ENCODE measurements at regions of chr22 and their contacts with region 1.

Region 1: DNA sequence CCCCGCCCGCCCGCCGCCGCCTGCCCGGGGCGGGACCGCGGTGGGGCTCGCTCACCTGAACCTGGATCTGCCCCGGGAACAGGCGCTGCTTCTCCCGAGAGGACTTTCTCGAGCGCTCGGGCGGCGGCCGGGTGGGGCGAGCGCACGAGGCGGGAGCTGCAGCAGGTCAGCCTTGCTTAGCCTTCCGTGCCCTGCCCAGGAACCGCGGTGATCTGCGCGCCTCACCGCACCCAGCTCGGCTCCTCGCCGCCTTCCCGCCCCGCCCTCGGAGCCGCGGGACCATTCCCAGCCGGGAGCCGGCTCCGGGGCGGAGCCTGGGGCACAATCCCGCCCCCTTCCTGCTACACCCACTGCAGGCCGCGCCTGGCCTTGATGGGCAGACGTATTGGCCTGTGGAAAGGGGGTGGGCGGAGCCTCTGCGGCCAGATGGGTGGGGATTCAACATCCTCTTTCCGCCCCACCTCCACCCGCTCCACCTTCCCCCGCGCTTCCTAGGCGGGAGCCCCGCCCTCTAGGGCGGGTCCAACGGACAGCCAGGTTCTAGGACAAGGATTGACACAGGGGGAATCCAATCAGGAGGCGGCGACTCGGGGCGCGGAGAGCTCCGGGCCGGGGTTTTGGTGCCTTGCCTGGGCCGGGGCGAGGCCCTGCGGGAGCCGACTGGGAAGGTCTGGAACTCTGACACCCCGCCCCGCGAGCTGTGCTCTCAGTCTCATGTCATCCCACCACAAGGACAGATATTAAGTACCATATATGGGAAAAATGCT is at the start of gene MYH9:
- DNase-seq: peak; percentile 97 to 99 (median 99)
- H3K4me3 ChIP-seq: peak within 1 kb of the TSS; percentile 82
- H3K4me3 Mint-ChIP-seq: peak within 1 kb of the TSS; percentile 85 to 99 (median 90)
- H3K27ac ChIP-seq: peak within 1 kb of the TSS; percentile 64
- H3K27ac Mint-ChIP-seq: peak within 1 kb of the TSS; percentile 73 to 99 (median 93)
- H3K4me1 ChIP-seq: peaks cover 33% of the 10 kb centered on the region
- H3K4me1 Mint-ChIP-seq: peaks cover 34 to 43% (median 38%) of the 10 kb centered on the region in 3 donors
- H3K27me3 ChIP-seq: no peaks in the 10 kb centered on the region
- H3K27me3 Mint-ChIP-seq: peaks cover 0 to 1% of the 10 kb centered on the region in 2 donors
- total RNA-seq, gene MYH9: 680 to 684 TPM

Region 2: DNA sequence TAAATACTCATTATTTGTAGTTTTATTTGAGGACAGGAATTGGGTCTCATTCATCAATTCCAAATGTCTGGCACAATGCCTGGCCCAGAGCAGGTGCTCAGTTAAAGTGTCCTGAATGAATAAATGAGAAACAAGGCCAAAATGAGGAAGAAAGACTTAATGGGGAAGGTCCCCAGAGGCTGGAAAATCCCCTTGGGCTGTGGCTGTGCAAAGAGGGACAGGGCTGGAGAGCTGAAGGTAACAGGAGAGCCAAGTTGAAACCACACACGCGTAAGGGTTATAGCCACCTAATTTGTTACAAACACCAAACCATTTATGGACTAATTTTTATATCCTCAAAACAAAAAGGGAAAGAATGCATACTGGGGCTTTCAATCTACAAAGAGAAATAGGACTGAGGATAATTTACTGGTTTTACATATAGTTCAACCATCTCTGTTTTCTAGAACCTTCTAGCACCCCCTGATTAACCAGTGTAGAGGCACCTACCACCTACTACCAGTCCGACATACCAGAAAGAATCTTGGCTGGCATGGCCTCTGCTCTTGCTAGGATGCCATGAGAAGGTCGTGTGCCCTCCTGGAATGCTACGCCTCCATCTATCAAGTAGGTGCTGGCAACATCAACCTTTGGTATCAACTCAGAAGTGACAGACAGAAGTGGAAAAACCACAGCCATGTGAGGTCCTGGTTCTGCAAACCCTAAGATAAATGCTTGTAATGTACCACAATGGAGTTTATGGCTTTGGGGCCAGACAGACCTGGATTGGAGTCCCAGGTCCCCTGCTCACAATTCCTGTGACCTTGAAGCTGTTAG is 28.5 kb before region 1 on chr22:
- CTCF ChIA-PET with region 1: interaction called, 17 read pairs
- POLR2A ChIA-PET with region 1: interaction called, 17 read pairs
- DNase-seq: peak in 1 of 5 donors; percentile 53
- H3K4me3 ChIP-seq: peak overlapping the region; percentile 5
- H3K4me3 Mint-ChIP-seq: peak overlapping the region; percentile 60 to 76 (median 71)
- H3K27ac ChIP-seq: no peak overlapping the region
- H3K27ac Mint-ChIP-seq: peak overlapping the region; percentile 92 to 99 (median 95)
- H3K4me1 ChIP-seq: peaks cover 98% of the 10 kb centered on the region
- H3K4me1 Mint-ChIP-seq: peaks cover 94 to 99% (median 99%) of the 10 kb centered on the region in 3 donors
- H3K27me3 ChIP-seq: no peaks in the 10 kb centered on the region
- H3K27me3 Mint-ChIP-seq: peaks cover 0 to 4% of the 10 kb centered on the region in 2 donors

Region 3: GRCh38 chr22:36369922-36370791 is 17.8 kb before region 1 on chr22:
- CTCF ChIA-PET with region 1: interaction called, 17 read pairs
- POLR2A ChIA-PET with region 1: interaction called, 64 read pairs
- DNase-seq: peak in 1 of 5 donors; percentile 53
- H3K4me3 ChIP-seq: peak overlapping the region; percentile 23
- H3K4me3 Mint-ChIP-seq: peak overlapping the region; percentile 83 to 96 (median 89)
- H3K27ac ChIP-seq: peak overlapping the region; percentile 38
- H3K27ac Mint-ChIP-seq: peak overlapping the region; percentile 85 to 100 (median 98)
- H3K4me1 ChIP-seq: peaks cover 100% of the 10 kb centered on the region
- H3K4me1 Mint-ChIP-seq: peaks cover 88 to 98% (median 97%) of the 10 kb centered on the region in 3 donors
- H3K27me3 ChIP-seq: no peaks in the 10 kb centered on the region
- H3K27me3 Mint-ChIP-seq: peaks cover 0 to 4% of the 10 kb centered on the region in 2 donors

Region 4: DNA sequence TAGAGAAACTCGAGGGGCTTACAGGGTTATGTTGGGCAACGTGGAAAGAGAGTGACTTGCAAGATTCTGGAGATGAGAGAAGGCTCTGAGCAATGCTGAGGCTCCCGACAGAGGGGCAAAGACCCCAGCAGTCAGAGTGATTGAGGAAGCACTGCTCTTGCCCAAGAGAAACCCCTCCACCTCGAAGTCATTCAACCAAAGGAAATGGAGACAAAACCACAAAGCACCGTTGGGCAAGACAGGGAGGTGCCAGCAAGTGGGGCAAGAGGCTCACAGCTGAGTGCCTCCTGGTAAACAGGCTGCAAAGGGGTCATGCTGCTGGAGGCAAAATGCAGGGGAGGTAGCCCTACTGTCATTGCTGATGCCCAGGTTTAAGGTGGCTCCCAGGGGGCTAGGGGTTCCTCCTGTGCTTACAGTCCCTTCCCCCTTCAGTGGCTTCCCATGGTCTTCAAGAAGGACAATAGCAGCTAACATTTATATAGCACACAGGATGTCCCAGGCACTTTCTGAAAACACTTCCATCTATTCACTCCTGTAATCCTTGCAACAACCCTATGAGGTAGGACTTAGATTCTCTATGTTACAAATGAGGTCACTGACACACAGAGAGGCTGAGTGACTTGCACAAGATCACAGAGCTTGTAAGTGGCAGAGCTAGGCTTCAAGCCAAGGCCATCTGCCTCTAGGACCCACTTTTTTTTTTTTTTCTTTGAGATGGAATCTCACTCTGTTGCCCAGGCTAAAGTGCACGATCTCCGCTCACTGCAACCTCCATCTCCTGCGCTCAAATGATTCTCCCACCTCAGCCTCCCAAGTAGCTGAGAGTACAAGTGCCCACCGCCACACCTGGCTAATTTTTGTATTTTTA is 18.0 kb after region 1 on chr22:
- CTCF ChIA-PET with region 1: interaction called, 4 read pairs
- POLR2A ChIA-PET with region 1: interaction called, 12 read pairs
- DNase-seq: peak; percentile 39 to 81 (median 69)
- H3K4me3 ChIP-seq: peak overlapping the region; percentile 11
- H3K4me3 Mint-ChIP-seq: peak overlapping the region; percentile 29 to 71 (median 61)
- H3K27ac ChIP-seq: peak overlapping the region; percentile 45
- H3K27ac Mint-ChIP-seq: peak overlapping the region; percentile 85 to 97 (median 94)
- H3K4me1 ChIP-seq: peaks cover 56% of the 10 kb centered on the region
- H3K4me1 Mint-ChIP-seq: peaks cover 47 to 65% (median 60%) of the 10 kb centered on the region in 3 donors
- H3K27me3 ChIP-seq: no peaks in the 10 kb centered on the region
- H3K27me3 Mint-ChIP-seq: no peaks in the 10 kb centered on the region

Region 5: GRCh38 chr22:36454916-36455570 is 67.1 kb after region 1 on chr22:
- CTCF ChIA-PET with region 1: interaction called, 4 read pairs
- POLR2A ChIA-PET with region 1: interaction called, 11 read pairs
- DNase-seq: peak; percentile 94 to 97 (median 95)
- H3K4me3 ChIP-seq: peak overlapping the region; percentile 85
- H3K4me3 Mint-ChIP-seq: peak overlapping the region; percentile 78 to 89 (median 82)
- H3K27ac ChIP-seq: peak overlapping the region; percentile 86
- H3K27ac Mint-ChIP-seq: peak overlapping the region; percentile 87 to 95 (median 92)
- H3K4me1 ChIP-seq: peaks cover 49% of the 10 kb centered on the region
- H3K4me1 Mint-ChIP-seq: peaks cover 39 to 53% (median 45%) of the 10 kb centered on the region in 3 donors
- H3K27me3 ChIP-seq: no peaks in the 10 kb centered on the region
- H3K27me3 Mint-ChIP-seq: peaks cover 0 to 2% of the 10 kb centered on the region in 2 donors

Measured in CD8-positive, alpha-beta memory T cell (primary cell).